Aorta (tissue), 5 donors: ENCODE measurements at regions of chr7 and their contacts with region 1.

Region 1: DNA sequence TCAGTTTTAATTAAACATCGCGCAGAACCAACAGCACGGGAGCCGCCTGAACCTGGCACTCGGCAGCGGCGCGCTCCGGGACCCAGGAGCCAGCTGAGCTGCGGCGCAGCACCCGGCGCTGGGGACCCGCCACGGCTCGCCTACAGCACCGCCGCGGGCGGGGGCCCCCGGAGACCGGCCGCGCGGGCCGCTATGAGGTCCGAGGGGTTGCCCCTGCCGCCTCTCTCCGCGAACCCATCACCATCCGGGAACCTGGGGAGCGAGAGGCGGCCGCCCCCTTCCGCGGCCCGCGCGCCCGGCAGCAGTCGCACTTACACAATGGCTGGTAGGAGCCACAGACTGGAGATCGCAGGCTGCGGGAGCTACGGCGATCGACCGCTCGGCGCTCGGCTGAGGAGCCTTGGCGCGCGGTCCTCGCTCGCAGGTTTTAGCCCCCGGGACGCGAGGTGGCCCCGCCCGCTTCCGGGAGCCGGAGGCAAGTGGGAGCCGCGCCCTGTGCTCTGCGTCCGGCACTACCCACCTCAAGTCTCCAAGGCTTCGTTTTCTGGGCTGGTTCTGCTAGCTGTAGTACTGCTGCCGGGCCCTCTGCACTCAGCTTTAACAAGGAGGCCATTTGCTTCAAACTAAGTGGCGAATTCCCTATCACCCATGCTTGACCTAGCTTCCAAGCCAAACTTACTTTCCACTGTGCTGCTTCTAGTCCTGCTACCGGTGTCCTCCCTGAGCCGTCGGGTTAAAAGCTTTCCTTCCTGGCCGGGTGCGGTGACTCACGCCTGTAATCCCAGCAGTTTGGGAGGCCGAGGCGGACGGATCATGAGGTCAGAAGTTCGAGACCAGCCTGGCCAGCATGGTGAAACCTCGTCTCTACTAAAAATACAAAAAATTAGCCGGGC is at the start of gene TPK1:
- DNase-seq: peak; percentile 96 to 97
- ATAC-seq: peak; percentile 99
- H3K4me3 ChIP-seq: peak within 1 kb of the TSS; percentile 77 to 86
- H3K27ac ChIP-seq: peak within 1 kb of the TSS; percentile 88 to 99
- H3K4me1 ChIP-seq: no peaks in the 10 kb centered on the region
- H3K27me3 ChIP-seq: no peaks in the 10 kb centered on the region
- total RNA-seq, gene TPK1: 11.5 to 14.1 TPM

Region 2: GRCh38 chr7:144738708-144739314 is 97.1 kb before region 1 on chr7:
- intact Hi-C with region 1: loop called in 1 of 2 experiments (anchors 5 kb)
- DNase-seq: no peak
- ATAC-seq: no peak
- H3K4me3 ChIP-seq: no peak overlapping the region
- H3K27ac ChIP-seq: no peak overlapping the region
- H3K4me1 ChIP-seq: no peaks in the 10 kb centered on the region
- H3K27me3 ChIP-seq: no peaks in the 10 kb centered on the region

Region 3: GRCh38 chr7:144786522-144786921 is 49.4 kb before region 1 on chr7:
- intact Hi-C with region 1: loop called (anchors 10 kb)
- DNase-seq: no peak
- ATAC-seq: no peak
- H3K4me3 ChIP-seq: no peak overlapping the region
- H3K27ac ChIP-seq: no peak overlapping the region
- H3K4me1 ChIP-seq: peaks cover 0 to 1% of the 10 kb centered on the region in 2 donors
- H3K27me3 ChIP-seq: no peaks in the 10 kb centered on the region

Region 4: DNA sequence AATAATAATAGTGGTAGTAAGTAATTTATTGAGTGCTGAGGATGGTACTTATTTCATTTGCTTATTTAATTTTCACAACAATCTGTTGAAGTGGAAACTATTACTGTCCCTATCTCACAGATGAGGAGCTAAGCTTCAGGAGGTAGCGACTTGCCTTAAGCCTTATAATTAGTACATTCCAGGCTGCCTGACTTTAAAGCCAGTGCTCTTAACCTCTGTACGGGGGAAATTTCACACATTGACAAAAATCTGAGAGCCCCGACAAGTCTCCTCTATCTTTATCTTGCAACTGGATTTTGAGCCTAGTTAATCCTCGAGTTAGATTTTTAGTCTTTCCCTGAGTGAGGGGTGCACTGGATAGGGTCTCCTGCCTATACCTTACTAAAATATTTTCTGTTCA is 36.1 kb after region 1 on chr7:
- intact Hi-C with region 1: no loop called
- DNase-seq: no peak
- ATAC-seq: no peak
- H3K4me3 ChIP-seq: no peak overlapping the region
- H3K27ac ChIP-seq: no peak overlapping the region
- H3K4me1 ChIP-seq: no peaks in the 10 kb centered on the region
- H3K27me3 ChIP-seq: no peaks in the 10 kb centered on the region